ENCODE measurements at regions of chr5 and their contacts with region 1.

Region 1: GRCh38 chr5:50751064-50751657 is 84.7 kb downstream of the PARP8 start:
- DNase-seq: peak; percentile 52
- H3K4me3 Mint-ChIP-seq: no peak overlapping the region
- H3K27ac Mint-ChIP-seq: peak overlapping the region; percentile 47
- H3K4me1 Mint-ChIP-seq: peaks cover 37% of the 10 kb centered on the region
- H3K27me3 Mint-ChIP-seq: no peaks in the 10 kb centered on the region

Region 2: DNA sequence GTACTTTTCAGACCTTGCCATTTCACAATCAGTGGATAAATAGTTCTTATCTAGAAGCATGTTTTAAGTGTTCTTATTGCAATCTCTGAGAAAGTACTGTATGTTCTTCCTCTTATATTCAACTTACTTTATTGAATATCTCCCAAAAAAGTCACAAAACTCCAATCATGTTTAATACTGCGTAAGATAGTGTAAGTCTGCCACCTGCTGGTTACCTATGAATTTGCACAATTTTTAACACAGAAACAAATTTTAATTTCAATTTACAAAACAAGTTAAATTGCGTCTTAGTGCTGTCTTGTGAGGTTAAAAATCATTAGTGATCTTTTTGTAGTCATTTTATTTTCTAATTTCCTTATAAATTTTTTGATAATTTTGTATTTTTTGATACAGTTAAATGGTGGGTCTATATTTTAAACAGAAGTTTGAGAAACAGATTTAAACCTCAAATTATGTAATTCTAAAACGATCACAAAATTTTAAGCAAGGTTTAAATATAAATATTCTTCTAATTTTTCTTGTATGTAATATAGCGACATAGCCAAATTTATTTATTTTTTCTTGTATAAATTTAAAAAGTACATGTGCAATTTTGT is 425.8 kb before region 1 on chr5:
- CTCF ChIA-PET with region 1: no interaction called
- intact Hi-C with region 1: loop called (anchors 2 kb)
- DNase-seq: no peak
- H3K4me3 Mint-ChIP-seq: no peak overlapping the region
- H3K27ac Mint-ChIP-seq: no peak overlapping the region
- H3K4me1 Mint-ChIP-seq: peaks cover 6% of the 10 kb centered on the region
- H3K27me3 Mint-ChIP-seq: no peaks in the 10 kb centered on the region

Region 3: DNA sequence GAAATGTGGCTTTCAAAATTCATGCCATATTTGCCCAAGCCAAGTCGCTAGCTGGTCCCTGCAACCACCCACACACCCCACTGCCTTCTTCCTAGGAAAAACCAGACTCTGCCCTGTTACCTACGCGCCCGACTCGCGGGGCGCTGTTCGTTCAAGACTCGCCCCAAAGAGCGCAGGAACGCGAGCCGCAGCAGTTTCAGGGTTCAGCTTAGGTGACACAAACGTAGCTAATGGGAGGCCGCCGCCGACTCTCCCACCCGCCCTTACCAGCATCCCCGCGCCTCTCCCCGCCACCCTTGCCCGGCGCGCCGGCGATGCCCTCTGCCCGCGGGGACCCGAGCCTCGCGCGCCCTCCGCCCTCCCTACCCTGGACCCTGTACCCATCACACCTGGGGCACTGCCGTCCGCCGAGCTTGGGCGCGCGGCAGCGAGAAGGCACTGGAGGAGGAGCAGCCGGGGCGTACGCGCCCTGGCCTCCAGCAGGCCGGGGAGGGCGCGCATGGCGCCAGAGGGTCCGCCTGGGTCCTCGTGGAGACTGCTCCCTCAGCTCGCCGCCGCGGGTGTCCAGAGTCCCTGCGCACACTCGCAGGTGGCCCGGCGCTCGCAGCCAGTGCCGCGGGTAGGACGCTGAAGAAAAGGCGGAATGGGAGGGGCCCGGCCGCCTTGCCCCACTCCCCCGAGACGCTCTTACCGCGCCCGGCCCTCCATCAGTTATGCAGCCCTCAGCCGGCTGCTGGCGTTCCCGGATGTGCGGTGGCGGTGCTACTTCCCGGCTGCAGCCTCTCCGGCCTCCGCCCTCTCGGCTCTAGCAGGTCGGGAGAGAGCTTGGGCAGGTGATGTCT is 310.3 kb before region 1 on chr5 and contains the start of gene EMB:
- CTCF ChIA-PET with region 1: interaction called, 4 read pairs
- intact Hi-C with region 1: loop called (anchors 1 kb)
- DNase-seq: peak; percentile 84
- H3K4me3 Mint-ChIP-seq: peak within 1 kb of the TSS; percentile 89
- H3K27ac Mint-ChIP-seq: peak within 1 kb of the TSS; percentile 96
- H3K4me1 Mint-ChIP-seq: peaks cover 56% of the 10 kb centered on the region
- H3K27me3 Mint-ChIP-seq: no peaks in the 10 kb centered on the region
- total RNA-seq, gene EMB: 41.4 to 43.7 TPM

Region 4: GRCh38 chr5:50595199-50595598 is 156.0 kb before region 1 on chr5:
- CTCF ChIA-PET with region 1: no interaction called
- intact Hi-C with region 1: loop called (anchors 2 kb)
- DNase-seq: no peak
- H3K4me3 Mint-ChIP-seq: no peak overlapping the region
- H3K27ac Mint-ChIP-seq: peak overlapping the region; percentile 8
- H3K4me1 Mint-ChIP-seq: peaks cover 40% of the 10 kb centered on the region
- H3K27me3 Mint-ChIP-seq: no peaks in the 10 kb centered on the region

Region 5: DNA sequence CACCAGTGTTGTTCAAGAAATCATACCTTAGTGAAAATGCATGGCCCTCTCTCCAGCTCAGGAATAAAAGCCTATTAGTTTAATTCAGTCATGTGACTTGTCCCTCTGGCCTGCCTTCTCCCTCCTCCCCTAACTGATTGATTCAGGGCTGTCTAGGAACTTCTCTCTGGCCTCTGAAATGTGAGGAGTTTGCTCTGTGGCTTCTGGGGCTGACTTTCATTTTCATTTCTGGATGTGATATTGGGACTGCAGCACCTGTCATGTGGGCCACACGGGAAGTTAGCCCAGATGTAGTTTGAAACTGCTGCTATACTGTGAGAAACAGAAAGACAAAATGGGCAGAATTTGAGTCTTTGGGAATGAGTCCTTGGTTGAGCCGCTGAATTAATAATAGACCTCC is 39.9 kb before region 1 on chr5:
- CTCF ChIA-PET with region 1: no interaction called
- intact Hi-C with region 1: loop called (anchors 1 kb)
- DNase-seq: peak; percentile 76
- H3K4me3 Mint-ChIP-seq: peak overlapping the region; percentile 71
- H3K27ac Mint-ChIP-seq: peak overlapping the region; percentile 88
- H3K4me1 Mint-ChIP-seq: peaks cover 79% of the 10 kb centered on the region
- H3K27me3 Mint-ChIP-seq: no peaks in the 10 kb centered on the region

Region 6: DNA sequence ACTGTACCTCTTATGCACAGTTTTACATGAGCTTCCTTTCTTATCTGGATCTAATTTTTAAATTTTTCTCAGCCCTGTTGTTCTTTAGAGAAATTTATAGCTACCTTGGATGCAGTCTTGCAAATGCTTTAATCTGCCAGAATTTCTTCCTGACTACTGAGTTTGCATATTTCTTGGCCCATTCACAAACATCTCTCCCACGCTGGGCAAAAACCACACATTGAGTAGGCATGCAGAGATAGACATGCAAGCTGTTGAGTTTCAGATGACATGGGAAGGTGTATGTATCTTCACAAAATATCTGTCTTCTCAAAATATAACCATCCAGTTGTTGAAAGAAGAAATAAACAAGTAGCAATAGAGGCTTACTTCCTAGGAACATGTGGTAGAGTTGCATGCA is 16.4 kb after region 1 on chr5:
- CTCF ChIA-PET with region 1: no interaction called
- intact Hi-C with region 1: no loop called
- DNase-seq: no peak
- H3K4me3 Mint-ChIP-seq: no peak overlapping the region
- H3K27ac Mint-ChIP-seq: no peak overlapping the region
- H3K4me1 Mint-ChIP-seq: peaks cover 20% of the 10 kb centered on the region
- H3K27me3 Mint-ChIP-seq: no peaks in the 10 kb centered on the region

Region 7: DNA sequence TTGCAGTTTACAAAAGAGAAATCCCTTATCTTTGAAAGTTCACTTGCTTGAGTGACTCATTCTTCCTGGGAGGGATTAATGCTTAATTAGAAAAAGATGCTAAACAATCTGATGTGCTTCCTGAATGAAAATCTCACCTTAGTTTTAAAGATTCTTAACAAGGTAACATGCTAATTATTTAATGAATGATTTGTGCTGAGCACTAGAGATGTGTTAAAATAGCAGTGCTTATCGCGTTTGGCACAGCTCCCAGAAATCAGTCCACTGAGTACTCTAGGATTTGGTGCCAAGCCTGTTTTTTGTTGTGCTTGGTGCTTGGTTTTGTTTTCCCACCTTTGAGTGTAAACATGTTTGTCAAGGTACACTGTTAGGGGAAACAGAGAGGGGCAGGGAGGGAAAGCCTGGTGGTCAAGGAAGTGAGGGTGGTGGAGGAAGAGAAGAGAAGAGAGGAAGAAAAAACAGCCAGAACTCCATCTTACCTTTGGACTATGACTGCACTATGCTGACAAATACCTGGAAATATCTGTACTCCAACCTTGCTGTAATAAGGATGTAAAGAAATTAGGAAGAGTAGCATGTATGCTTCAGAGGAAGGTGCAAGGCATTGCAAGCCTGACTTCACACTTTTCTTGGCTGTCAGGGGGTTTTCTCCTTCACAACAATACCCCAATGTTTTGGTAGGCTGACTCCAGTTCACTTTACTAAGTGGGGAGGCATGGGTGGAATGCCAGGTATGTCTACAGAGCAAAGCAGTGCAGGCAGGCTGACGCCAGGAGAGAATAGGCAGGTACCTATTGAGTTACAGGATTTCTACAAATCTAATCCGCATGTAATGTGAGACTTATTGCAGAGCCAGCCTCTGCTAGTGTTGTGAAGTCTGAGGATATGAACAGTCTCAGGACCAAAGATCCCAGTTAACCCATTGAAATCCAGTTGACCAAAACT is 474.9 kb after region 1 on chr5:
- CTCF ChIA-PET with region 1: no interaction called
- intact Hi-C with region 1: no loop called
- DNase-seq: no peak
- H3K4me3 Mint-ChIP-seq: no peak overlapping the region
- H3K27ac Mint-ChIP-seq: no peak overlapping the region
- H3K4me1 Mint-ChIP-seq: no peaks in the 10 kb centered on the region
- H3K27me3 Mint-ChIP-seq: no peaks in the 10 kb centered on the region

Measured in activated naive CD4-positive, alpha-beta T cell treated with anti-CD3 and anti-CD28 coated beads for 36 hours (primary cell).